HEK293T (cell line): ENCODE measurements at regions of chr5 and their contacts with region 1.

Region 1: DNA sequence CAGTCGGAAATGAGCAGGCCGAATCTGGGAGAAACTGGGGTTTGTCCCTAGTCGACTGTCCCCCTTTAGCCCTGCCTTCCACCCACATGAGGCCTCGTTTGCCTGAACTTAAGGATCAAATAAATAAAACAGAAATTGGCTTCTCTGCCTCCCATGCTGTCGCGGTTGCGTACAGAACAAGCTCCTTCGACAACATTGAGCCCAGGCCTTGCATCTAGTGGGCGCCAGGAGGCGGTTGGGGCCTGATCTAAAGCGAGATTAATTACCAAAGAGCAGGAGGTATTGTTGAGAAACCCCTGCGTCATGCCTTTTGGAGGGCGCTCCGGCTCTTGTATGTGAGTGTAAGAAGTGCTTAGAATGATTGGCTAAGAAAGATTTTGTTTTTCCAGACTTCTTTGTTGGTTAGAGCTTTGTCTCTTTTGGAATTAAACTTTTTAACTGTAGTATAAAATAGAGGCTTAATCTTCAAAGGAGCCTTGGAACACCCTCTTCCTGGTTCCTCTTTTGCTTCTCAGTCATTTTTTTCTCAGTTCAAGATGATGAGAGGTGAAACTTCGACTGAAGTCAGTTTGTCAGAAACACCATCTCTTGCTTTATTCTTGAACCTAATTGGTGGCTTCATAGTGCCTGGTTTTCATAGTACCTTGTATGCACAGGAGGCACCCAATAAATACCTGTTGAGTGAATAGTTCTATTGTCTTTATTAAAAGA is 827 bp downstream of the ATP6V0E1 start:
- DNase-seq: peak; percentile 74

Region 2: DNA sequence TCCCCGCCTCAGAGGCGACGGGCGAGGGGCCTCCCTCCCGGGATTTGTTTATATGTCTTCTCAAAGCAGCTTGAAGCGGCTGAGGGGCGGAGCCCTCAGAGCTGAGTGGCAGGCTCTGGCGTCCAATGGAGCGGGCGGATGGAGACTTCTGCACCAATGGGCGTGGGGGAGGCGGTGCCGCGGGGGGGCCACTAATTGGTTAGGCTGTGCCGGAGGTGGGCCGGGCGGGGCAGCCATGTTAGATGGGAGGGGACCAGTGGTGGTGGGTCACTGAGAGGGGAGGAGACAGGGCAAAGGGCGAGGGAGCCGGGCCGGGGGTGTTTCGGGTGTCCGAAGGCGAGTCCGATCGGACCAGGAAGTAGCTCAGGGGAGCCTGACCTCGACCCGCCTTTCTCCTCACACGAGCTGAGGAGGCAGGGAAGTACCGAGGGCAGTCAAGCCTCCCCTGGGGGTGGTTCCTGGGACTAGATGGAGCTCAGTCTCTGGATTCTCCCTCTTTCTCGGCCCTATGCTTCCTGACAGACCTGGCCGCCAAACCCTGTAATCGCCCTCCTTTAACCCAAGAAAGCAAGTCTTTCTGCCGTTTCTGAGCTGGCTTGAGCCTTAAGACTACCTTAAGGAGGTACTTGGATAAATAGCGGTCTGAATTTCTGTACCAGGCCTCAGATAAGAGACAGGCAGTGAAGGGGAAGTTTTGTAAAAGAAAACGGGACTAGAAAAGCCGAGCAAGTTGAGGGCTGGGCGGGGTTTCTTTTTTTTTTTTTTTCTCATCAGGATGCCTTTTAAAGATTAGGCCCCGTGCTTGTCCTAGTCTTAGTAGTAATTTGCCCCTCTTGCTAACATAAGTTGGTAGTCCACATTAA is 72.9 kb after region 1 on chr5:
- CTCF ChIA-PET with region 1: no interaction called
- POLR2A ChIA-PET with region 1: interaction called, 15 read pairs
- DNase-seq: peak; percentile 98